Heart left ventricle (tissue), 16 donors: ENCODE measurements at regions of chr14 and their contacts with region 1.

Region 1: GRCh38 chr14:63641473-63642228 is at the start of gene WDR89:
- DNase-seq: peak; percentile 97 to 98 (median 98)
- ATAC-seq: peak; percentile 98 to 99 (median 98)
- H3K4me3 ChIP-seq: peak within 1 kb of the TSS; percentile 35 to 82 (median 70)
- H3K27ac ChIP-seq: peak within 1 kb of the TSS; percentile 84 to 96 (median 92)
- H3K4me1 ChIP-seq: peaks cover 0 to 28% (median 10%) of the 10 kb centered on the region in 12 donors
- H3K27me3 ChIP-seq: no peaks in the 10 kb centered on the region
- CTCF ChIP-seq: peak; percentile 50 to 77 (median 68)
- POLR2A ChIP-seq: peak in 1 of 2 donors; percentile 44
- total RNA-seq, gene WDR89: 3.3 to 7.6 (median 6.3) TPM

Region 2: GRCh38 chr14:63192085-63192484 is 449.6 kb before region 1 on chr14:
- intact Hi-C with region 1: no loop called
- DNase-seq: peak in 1 of 5 donors; percentile 25
- ATAC-seq: peak in 3 of 4 donors; percentile 79 to 91 (median 79)
- H3K4me3 ChIP-seq: no peak overlapping the region
- H3K27ac ChIP-seq: peak overlapping the region in 11 of 12 donors; percentile 3 to 50 (median 15)
- H3K4me1 ChIP-seq: peaks cover 0 to 13% (median 0%) of the 10 kb centered on the region in 12 donors
- H3K27me3 ChIP-seq: no peaks in the 10 kb centered on the region
- CTCF ChIP-seq: no peak
- POLR2A ChIP-seq: no peak

Region 3: DNA sequence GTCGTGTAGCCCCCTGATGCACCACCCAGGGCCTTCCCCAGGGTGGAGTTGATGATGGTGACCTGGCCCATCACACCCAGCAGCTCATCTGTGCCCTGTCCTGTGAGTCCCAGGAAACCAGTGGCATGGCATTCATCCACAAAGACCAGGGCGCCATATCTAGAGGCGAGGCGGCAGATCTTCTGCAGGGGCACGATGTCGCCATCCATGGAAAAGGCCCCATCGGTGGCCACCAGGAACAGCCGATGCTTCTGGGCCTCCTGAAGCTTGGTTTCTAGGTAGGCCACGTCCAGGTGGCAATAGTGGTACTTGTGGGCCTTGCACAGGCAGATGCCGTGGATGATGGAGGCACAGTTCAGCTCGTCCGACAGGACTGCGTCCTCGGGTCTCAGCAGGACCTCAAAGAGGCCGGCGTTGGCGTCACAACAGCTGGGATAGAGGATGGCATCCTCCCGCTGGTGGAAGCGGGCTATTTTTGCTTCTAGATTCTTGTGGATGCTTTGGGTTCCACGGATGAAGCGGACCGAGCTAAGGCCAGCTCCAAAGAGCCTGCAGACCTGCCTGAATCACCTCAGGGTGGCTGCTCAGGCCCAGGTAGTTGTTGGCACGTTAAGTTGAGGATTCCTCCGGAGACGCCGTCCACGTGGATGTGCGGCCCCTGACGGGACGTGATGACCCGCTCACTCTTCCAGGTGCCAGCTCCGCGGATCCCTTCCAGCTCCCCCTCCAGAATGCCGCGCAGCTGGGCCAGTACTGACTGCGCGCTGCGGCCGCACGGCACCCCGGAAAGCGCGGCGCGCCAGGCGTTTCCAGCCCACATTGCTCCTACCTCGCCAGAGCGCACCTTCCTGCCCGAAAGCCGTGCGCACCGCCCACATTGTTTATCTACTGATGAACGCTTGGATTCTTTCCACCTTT is 46.9 kb before region 1 on chr14:
- intact Hi-C with region 1: no loop called
- DNase-seq: no peak
- ATAC-seq: no peak
- H3K4me3 ChIP-seq: no peak overlapping the region
- H3K27ac ChIP-seq: no peak overlapping the region
- H3K4me1 ChIP-seq: no peaks in the 10 kb centered on the region
- H3K27me3 ChIP-seq: no peaks in the 10 kb centered on the region
- CTCF ChIP-seq: no peak
- POLR2A ChIP-seq: no peak

Region 4: DNA sequence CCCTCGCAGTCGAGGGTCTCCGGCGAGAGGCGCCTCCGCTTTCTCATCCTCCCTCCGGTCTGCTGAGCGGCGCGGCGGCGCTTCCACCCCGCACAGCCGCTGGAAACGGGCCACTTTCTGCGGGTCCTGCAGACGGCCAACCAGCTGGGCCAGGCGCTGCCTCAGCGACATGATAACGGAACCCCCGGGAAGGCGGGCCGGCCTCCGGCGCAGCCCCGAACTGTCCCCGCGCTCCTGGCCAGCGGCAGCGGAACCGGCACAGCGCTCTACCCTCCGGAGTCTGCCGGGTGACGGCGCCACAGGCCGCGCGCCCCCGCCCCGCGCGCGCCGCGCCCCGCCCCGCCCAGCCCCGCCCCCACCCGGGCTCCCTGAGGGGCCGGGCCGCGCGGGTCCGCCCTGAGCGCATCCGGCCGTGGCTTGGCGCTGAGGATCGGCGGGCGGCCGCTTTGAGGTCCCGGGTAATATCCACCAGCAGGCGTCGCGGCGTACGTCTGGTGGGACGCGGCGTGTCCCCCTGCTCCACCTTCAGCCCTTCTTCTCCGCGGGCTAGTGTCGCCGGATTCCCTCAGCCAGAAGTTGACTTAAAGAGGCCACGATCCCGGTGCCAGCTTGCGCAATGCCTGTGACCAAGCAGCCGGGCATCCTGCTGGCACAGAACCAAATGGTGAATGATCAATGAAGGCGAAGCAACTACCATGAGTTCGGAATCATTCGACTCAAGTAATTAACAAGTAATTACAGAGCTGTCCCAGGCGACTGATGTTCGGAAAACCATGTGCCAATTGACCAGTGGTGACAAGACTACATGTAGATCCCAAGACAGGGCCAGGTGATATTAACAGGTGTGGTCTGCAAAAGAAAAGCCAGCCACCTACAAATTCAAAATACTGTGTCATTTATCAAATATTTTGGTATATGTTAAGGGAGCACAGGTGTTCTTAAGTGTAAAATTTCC is 86.4 kb after region 1 on chr14 and contains the start of gene SGPP1:
- intact Hi-C with region 1: loop called in 3 of 10 experiments (anchors 2 to 10 kb)
- DNase-seq: peak; percentile 82 to 90 (median 84)
- ATAC-seq: peak; percentile 86 to 97 (median 96)
- H3K4me3 ChIP-seq: peak within 1 kb of the TSS; percentile 82 to 99 (median 96)
- H3K27ac ChIP-seq: peak within 1 kb of the TSS; percentile 58 to 94 (median 90)
- H3K4me1 ChIP-seq: peaks cover 0 to 40% (median 16%) of the 10 kb centered on the region in 12 donors
- H3K27me3 ChIP-seq: no peaks in the 10 kb centered on the region
- CTCF ChIP-seq: peak; percentile 19 to 61 (median 45)
- POLR2A ChIP-seq: peak in 1 of 2 donors; percentile 56
- total RNA-seq, gene SGPP1: 4.3 to 9.2 (median 5.1) TPM

Region 5: GRCh38 chr14:63760014-63760413 is 118.4 kb after region 1 on chr14:
- intact Hi-C with region 1: loop called in 1 of 10 experiments (anchors 10 kb)
- DNase-seq: no peak
- ATAC-seq: no peak
- H3K4me3 ChIP-seq: peak overlapping the region in 2 of 12 donors; percentile 38 to 39
- H3K27ac ChIP-seq: peak overlapping the region in 4 of 12 donors; percentile 6 to 90 (median 34)
- H3K4me1 ChIP-seq: peaks cover 0 to 17% (median 0%) of the 10 kb centered on the region in 12 donors
- H3K27me3 ChIP-seq: no peaks in the 10 kb centered on the region
- CTCF ChIP-seq: no peak
- POLR2A ChIP-seq: no peak